ENCODE measurements at regions of chr20 and their contacts with region 1.

Region 1: DNA sequence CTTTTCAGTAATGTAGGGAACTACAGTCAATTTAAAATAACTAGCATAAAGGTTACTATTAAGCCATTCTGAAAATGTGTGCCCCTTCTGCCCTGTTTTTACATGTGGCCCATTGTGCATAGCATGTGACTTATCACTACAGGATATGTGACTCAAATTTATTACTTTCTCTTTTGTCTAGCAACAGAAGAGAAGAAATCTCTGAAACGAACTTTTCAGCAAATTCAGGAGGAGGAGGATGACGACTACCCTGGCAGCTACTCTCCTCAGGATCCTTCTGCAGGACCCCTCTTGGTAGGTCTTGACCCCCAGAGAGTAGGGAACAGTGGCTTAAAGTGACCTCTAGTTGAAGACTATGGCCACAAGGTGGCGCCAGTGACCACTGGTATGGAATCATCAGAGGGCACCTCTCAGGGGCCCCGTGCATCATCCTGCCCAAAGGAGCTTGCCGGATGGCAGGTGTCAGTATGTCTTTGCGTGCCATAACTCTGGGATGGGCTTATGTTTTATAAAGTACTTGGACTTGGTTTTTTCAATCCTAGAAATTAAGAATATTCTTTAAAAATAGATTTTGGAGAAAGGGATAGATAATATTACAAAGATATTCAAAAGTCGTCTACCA is 23.9 kb downstream of the RPRD1B start:
- DNase-seq: peak; percentile 53
- H3K4me3 ChIP-seq: no peak overlapping the region
- H3K27ac ChIP-seq: no peak overlapping the region
- H3K4me1 ChIP-seq: no peaks in the 10 kb centered on the region
- H3K27me3 ChIP-seq: no peaks in the 10 kb centered on the region
- CTCF ChIP-seq: peak; percentile 75 to 82

Region 2: GRCh38 chr20:37564388-37565133 is 492.9 kb before region 1 on chr20:
- CTCF ChIA-PET with region 1: no interaction called
- dilution Hi-C with region 1: no loop called
- in situ Hi-C with region 1: loop called in 1 of 2 experiments (anchors 10 kb)
- intact Hi-C with region 1: loop called (anchors 1 kb)
- DNase-seq: peak; percentile 7
- H3K4me3 ChIP-seq: no peak overlapping the region
- H3K27ac ChIP-seq: no peak overlapping the region
- H3K4me1 ChIP-seq: no peaks in the 10 kb centered on the region
- H3K27me3 ChIP-seq: peaks cover 3% of the 10 kb centered on the region
- CTCF ChIP-seq: peak; percentile 57 to 96

Region 3: DNA sequence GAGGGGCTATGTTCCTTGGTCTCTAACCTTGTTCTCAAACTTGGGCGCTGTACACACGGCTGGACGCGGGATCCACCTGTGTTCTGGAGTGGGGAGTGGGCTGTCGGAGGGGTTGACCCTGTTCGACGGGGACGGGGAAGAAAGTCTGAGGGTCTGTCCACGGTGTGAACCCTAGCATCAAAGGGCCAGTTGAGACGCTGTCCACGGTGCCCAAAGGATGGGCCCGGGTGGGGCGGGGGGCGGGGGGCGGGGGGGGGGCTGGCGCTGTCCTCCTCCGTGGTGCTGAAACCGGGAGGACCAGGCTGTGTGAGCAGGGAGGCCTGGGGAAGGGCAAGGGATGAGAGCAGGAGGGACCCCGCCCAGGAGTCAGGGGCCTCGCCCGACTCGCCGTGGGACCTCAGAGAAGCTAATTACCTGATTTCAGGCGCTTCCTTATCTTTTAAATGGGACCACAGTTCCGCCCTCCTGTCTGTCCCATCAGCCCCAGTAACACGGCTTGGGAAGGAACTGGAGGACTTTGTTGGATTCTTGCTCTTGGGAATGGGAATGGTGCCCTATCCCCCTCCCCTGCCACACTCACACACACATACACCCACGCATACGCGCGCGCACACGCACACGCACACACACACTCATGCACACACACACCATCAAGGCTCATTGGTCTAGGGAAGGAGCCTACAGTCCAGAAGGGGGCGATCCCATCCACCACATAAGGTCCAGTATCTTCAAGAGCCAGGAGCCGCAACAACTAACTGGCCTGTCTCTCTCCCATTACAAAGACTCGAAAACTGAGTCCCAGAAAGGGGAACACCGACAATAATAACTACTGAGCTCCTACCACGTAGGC is 155.6 kb before region 1 on chr20:
- CTCF ChIA-PET with region 1: no interaction called
- dilution Hi-C with region 1: no loop called
- in situ Hi-C with region 1: no loop called
- intact Hi-C with region 1: loop called (anchors 2 kb)
- DNase-seq: peak; percentile 62
- H3K4me3 ChIP-seq: peak overlapping the region in 2 of 3 experiments; percentile 35 to 65
- H3K27ac ChIP-seq: no peak overlapping the region
- H3K4me1 ChIP-seq: peaks cover 7% of the 10 kb centered on the region
- H3K27me3 ChIP-seq: no peaks in the 10 kb centered on the region
- CTCF ChIP-seq: peak; percentile 27 to 57

Region 4: GRCh38 chr20:38023181-38024001 is 34.1 kb before region 1 on chr20:
- CTCF ChIA-PET with region 1: no interaction called
- dilution Hi-C with region 1: no loop called
- in situ Hi-C with region 1: no loop called
- intact Hi-C with region 1: no loop called
- DNase-seq: no peak
- H3K4me3 ChIP-seq: no peak overlapping the region
- H3K27ac ChIP-seq: no peak overlapping the region
- H3K4me1 ChIP-seq: no peaks in the 10 kb centered on the region
- H3K27me3 ChIP-seq: no peaks in the 10 kb centered on the region
- CTCF ChIP-seq: no peak

Region 5: GRCh38 chr20:38304845-38305447 is 247.5 kb after region 1 on chr20:
- CTCF ChIA-PET with region 1: no interaction called
- dilution Hi-C with region 1: no loop called
- in situ Hi-C with region 1: loop called in 1 of 2 experiments (anchors 25 kb)
- intact Hi-C with region 1: loop called (anchors 5 kb)
- DNase-seq: peak; percentile 30
- H3K4me3 ChIP-seq: no peak overlapping the region
- H3K27ac ChIP-seq: no peak overlapping the region
- H3K4me1 ChIP-seq: peaks cover 12% of the 10 kb centered on the region
- H3K27me3 ChIP-seq: no peaks in the 10 kb centered on the region
- CTCF ChIP-seq: peak; percentile 61 to 85